Mammary epithelial cell (primary cell): ENCODE measurements at regions of chr5 and their contacts with region 1.

Region 1: GRCh38 chr5:72523960-72524582 is 16.9 kb upstream of the ZNF366 start:
- DNase-seq: peak; percentile 53
- H3K4me3 ChIP-seq: no peak overlapping the region
- H3K27ac ChIP-seq: no peak overlapping the region
- H3K4me1 ChIP-seq: peaks cover 7% of the 10 kb centered on the region
- H3K27me3 ChIP-seq: no peaks in the 10 kb centered on the region
- CTCF ChIP-seq: peak; percentile 62 to 67

Region 2: DNA sequence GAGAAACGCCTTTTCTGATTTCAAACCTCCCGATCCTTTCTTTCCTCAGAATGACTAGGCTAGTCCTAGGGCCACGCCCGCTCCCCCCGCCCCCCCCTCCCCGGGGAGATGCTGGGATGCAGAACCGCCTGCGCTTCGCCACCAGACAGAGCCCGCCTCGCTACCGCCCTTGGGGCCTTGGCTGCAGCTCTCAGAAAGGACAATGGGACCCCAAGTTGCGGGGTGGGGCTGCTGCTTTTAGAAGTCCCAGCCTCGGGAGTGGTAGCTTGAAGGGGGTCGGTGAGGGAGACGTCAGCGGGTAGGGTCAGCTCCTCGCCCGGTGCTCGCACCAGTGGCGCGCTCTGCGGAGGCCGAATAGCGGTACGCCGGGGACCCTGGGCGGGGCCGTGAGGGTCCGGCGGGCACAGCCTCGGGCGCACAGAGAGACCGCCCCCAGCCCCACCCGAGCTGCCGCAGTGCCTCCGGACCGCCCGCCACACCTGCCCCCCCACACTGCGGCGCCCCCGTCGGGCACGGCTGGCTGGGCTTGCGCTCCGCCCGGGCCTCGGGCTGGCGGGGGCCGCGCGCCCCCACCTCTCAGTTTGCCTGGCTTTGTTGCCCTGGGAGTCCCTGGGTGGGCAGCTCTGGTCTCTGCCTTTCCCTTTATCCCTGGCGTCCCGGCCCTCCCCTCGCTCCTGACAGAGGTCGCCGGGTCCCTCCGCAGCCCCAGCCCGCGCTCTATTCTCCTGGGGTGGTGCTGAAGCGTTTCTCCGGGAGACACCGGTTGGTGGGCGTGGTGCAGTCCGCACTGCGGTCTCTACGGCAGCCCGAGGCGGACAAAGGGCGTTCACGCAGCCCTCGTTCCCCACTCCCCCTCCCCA is 415.6 kb before region 1 on chr5:
- CTCF ChIA-PET with region 1: no interaction called
- dilution Hi-C with region 1: no loop called
- in situ Hi-C with region 1: loop called in 1 of 2 experiments (anchors 25 kb)
- intact Hi-C with region 1: no loop called
- DNase-seq: peak; percentile 33
- H3K4me3 ChIP-seq: peak overlapping the region; percentile 64 to 74 (median 66)
- H3K27ac ChIP-seq: no peak overlapping the region
- H3K4me1 ChIP-seq: peaks cover 22% of the 10 kb centered on the region
- H3K27me3 ChIP-seq: peaks cover 18% of the 10 kb centered on the region
- CTCF ChIP-seq: no peak

Region 3: GRCh38 chr5:72366324-72366976 is 157.6 kb before region 1 on chr5:
- CTCF ChIA-PET with region 1: interaction called, 18 read pairs
- dilution Hi-C with region 1: no loop called
- in situ Hi-C with region 1: loop called (anchors 10 kb)
- intact Hi-C with region 1: loop called (anchors 1 kb)
- DNase-seq: peak; percentile 61
- H3K4me3 ChIP-seq: no peak overlapping the region
- H3K27ac ChIP-seq: no peak overlapping the region
- H3K4me1 ChIP-seq: peaks cover 49% of the 10 kb centered on the region
- H3K27me3 ChIP-seq: no peaks in the 10 kb centered on the region
- CTCF ChIP-seq: peak; percentile 75 to 81

Region 4: DNA sequence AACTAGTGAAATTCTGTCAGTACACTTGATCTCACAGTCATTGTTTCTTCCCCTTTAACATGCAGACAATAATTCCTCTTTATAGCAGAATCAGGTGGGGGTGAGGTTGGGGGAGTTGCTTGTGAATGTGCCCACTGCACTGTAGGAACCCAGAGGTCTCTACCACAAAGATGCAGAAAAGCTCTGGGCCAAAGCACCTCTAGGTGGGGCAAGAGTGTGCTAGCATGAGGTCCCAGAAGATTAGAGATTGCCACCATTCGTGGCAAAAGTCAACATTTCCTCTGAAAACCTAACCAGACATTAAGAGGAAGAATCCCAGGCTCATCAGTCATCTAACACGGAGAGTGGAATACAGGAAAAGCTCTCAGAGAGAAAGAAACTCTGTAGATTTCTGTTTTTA is 129.4 kb before region 1 on chr5:
- CTCF ChIA-PET with region 1: interaction called, 3 read pairs
- dilution Hi-C with region 1: no loop called
- in situ Hi-C with region 1: no loop called
- intact Hi-C with region 1: loop called (anchors 2 kb)
- DNase-seq: no peak
- H3K4me3 ChIP-seq: no peak overlapping the region
- H3K27ac ChIP-seq: no peak overlapping the region
- H3K4me1 ChIP-seq: peaks cover 31% of the 10 kb centered on the region
- H3K27me3 ChIP-seq: no peaks in the 10 kb centered on the region
- CTCF ChIP-seq: peak; percentile 21 to 61

Region 5: GRCh38 chr5:72470826-72471225 is 53.2 kb before region 1 on chr5:
- CTCF ChIA-PET with region 1: no interaction called
- dilution Hi-C with region 1: no loop called
- in situ Hi-C with region 1: no loop called
- intact Hi-C with region 1: loop called (anchors 2 kb)
- DNase-seq: peak; percentile 85
- H3K4me3 ChIP-seq: no peak overlapping the region
- H3K27ac ChIP-seq: peak overlapping the region; percentile 65
- H3K4me1 ChIP-seq: peaks cover 49% of the 10 kb centered on the region
- H3K27me3 ChIP-seq: no peaks in the 10 kb centered on the region
- CTCF ChIP-seq: no peak

Region 6: GRCh38 chr5:72733810-72734209 is 209.7 kb after region 1 on chr5:
- CTCF ChIA-PET with region 1: no interaction called
- dilution Hi-C with region 1: no loop called
- in situ Hi-C with region 1: no loop called
- intact Hi-C with region 1: no loop called
- DNase-seq: no peak
- H3K4me3 ChIP-seq: no peak overlapping the region
- H3K27ac ChIP-seq: no peak overlapping the region
- H3K4me1 ChIP-seq: no peaks in the 10 kb centered on the region
- H3K27me3 ChIP-seq: peaks cover 1% of the 10 kb centered on the region
- CTCF ChIP-seq: no peak